ENCODE measurements at regions of chr7 and their contacts with region 1.

Region 1: GRCh38 chr7:64887756-64888508 is 15.1 kb upstream of the ZNF273 start:
- DNase-seq: peak in 1 of 2 donors; percentile 31
- ATAC-seq: peak; percentile 8 to 67 (median 43)
- H3K4me3 ChIP-seq: peak overlapping the region; percentile 34 to 71 (median 58)
- H3K27ac ChIP-seq: peak overlapping the region in 1 of 10 donors; percentile 8
- H3K4me1 ChIP-seq: peaks cover 6 to 30% (median 19%) of the 10 kb centered on the region in 9 donors
- H3K27me3 ChIP-seq: peaks cover 0 to 34% (median 8%) of the 10 kb centered on the region in 7 donors
- CTCF ChIP-seq: peak in 7 of 9 donors; percentile 45 to 57 (median 54)

Region 2: GRCh38 chr7:64313740-64314491 is 574.0 kb before region 1 on chr7 and contains the start of gene ZNF736:
- intact Hi-C with region 1: loop called in 1 of 10 experiments (anchors 10 kb)
- DNase-seq: peak; percentile 85 to 92
- ATAC-seq: peak; percentile 99 to 100 (median 100)
- H3K4me3 ChIP-seq: peak within 1 kb of the TSS; percentile 58 to 93 (median 80)
- H3K27ac ChIP-seq: peak within 1 kb of the TSS in 9 of 10 donors; percentile 42 to 92 (median 68)
- H3K4me1 ChIP-seq: peaks cover 3 to 26% (median 19%) of the 10 kb centered on the region in 9 donors
- H3K27me3 ChIP-seq: no peaks in the 10 kb centered on the region
- CTCF ChIP-seq: no peak
- total RNA-seq, gene ZNF736: 4.4 to 8.4 (median 6.4) TPM

Region 3: GRCh38 chr7:64774204-64774842 is 113.6 kb before region 1 on chr7:
- intact Hi-C with region 1: no loop called
- DNase-seq: no peak
- ATAC-seq: no peak
- H3K4me3 ChIP-seq: no peak overlapping the region
- H3K27ac ChIP-seq: no peak overlapping the region
- H3K4me1 ChIP-seq: no peaks in the 10 kb centered on the region
- H3K27me3 ChIP-seq: peaks cover 0 to 3% (median 0%) of the 10 kb centered on the region in 7 donors
- CTCF ChIP-seq: no peak

Region 4: GRCh38 chr7:64945776-64946175 is 57.8 kb after region 1 on chr7:
- intact Hi-C with region 1: no loop called
- DNase-seq: no peak
- ATAC-seq: no peak
- H3K4me3 ChIP-seq: no peak overlapping the region
- H3K27ac ChIP-seq: no peak overlapping the region
- H3K4me1 ChIP-seq: peaks cover 0 to 12% (median 11%) of the 10 kb centered on the region in 9 donors
- H3K27me3 ChIP-seq: peaks cover 10 to 75% (median 40%) of the 10 kb centered on the region in 7 donors
- CTCF ChIP-seq: no peak

Region 5: DNA sequence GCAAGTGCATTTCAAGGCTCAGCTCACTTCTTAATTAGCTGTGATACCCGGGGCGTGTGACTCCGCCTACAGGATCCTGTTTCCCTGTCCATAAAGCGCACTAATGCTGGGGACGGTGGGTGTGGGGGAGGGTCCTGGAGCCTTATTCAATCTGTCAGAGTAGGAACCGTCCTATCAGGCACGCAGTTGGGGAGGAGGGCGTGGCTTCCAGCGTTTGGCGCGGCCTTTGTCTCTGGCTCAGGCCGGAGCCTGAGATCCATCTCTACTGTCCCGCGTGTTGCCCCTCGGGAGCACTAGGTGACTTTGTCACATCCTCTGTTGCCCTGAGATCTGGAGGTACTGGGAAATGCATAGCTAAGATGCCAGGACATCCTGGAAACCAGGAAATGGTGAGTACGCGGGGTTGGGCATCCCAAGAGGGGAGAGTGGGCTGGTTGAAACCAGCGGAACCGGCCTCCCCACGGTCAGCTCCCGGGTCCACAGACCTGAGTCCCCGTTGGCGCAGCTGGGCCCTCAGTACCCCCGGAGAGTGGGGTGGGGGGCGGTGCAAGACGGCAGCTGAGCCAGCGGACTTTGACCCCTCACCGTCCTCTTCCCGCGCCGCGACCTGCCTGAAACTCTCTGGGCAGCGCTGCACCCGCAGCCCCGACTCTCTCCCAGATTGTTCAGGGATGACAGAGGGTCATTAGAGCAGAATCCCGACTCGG is 381.4 kb after region 1 on chr7:
- intact Hi-C with region 1: no loop called
- DNase-seq: peak; percentile 20 to 24
- ATAC-seq: peak in 7 of 8 donors; percentile 43 to 81 (median 69)
- H3K4me3 ChIP-seq: peak overlapping the region in 7 of 10 donors; percentile 3 to 44 (median 41)
- H3K27ac ChIP-seq: no peak overlapping the region
- H3K4me1 ChIP-seq: peaks cover 0 to 11% (median 10%) of the 10 kb centered on the region in 9 donors
- H3K27me3 ChIP-seq: peaks cover 6 to 58% (median 54%) of the 10 kb centered on the region in 7 donors
- CTCF ChIP-seq: no peak

Measured in heart right ventricle (tissue), 16 donors.